Activated naive CD4-positive, alpha-beta T cell treated with anti-CD3 and anti-CD28 coated beads for 36 hours (primary cell): ENCODE measurements at regions of chr6 and their contacts with region 1.

Region 1: GRCh38 chr6:33271458-33272274 is at the starts of genes RPS18 and VPS52:
- DNase-seq: peak; percentile 95
- H3K4me3 Mint-ChIP-seq: peak within 1 kb of the TSS; percentile 99
- H3K27ac Mint-ChIP-seq: peak within 1 kb of the TSS; percentile 100
- H3K4me1 Mint-ChIP-seq: peaks cover 45% of the 10 kb centered on the region
- H3K27me3 Mint-ChIP-seq: no peaks in the 10 kb centered on the region
- total RNA-seq, gene RPS18: 5,497 to 5,551 TPM
- total RNA-seq, gene VPS52: 30.3 to 31.0 TPM

Region 2: GRCh38 chr6:33200219-33201146 is 71.2 kb before region 1 on chr6 and contains the starts of genes RXRB and SLC39A7:
- CTCF ChIA-PET with region 1: no interaction called
- intact Hi-C with region 1: loop called (anchors 1 kb)
- DNase-seq: peak; percentile 100
- H3K4me3 Mint-ChIP-seq: peak within 1 kb of the TSS; percentile 98
- H3K27ac Mint-ChIP-seq: peak within 1 kb of the TSS; percentile 97
- H3K4me1 Mint-ChIP-seq: peaks cover 60% of the 10 kb centered on the region
- H3K27me3 Mint-ChIP-seq: no peaks in the 10 kb centered on the region
- total RNA-seq, gene RXRB: 50.4 to 50.6 TPM
- total RNA-seq, gene SLC39A7: 35.9 to 39.5 TPM

Region 3: GRCh38 chr6:33288921-33289748 is 17.5 kb after region 1 on chr6 and contains the starts of genes PFDN6 and WDR46:
- CTCF ChIA-PET with region 1: interaction called, 11 read pairs
- intact Hi-C with region 1: loop called (anchors 1 kb)
- DNase-seq: peak; percentile 85
- H3K4me3 Mint-ChIP-seq: peak within 1 kb of the TSS; percentile 99
- H3K27ac Mint-ChIP-seq: peak within 1 kb of the TSS; percentile 91
- H3K4me1 Mint-ChIP-seq: peaks cover 43% of the 10 kb centered on the region
- H3K27me3 Mint-ChIP-seq: no peaks in the 10 kb centered on the region
- total RNA-seq, gene PFDN6: 67.9 to 81.3 TPM
- total RNA-seq, gene WDR46: 42.5 to 42.9 TPM

Region 4: GRCh38 chr6:33317669-33318425 is 46.2 kb after region 1 on chr6 and contains the start of gene ZBTB22:
- CTCF ChIA-PET with region 1: interaction called, 6 read pairs
- intact Hi-C with region 1: loop called (anchors 1 kb)
- DNase-seq: peak; percentile 97
- H3K4me3 Mint-ChIP-seq: peak within 1 kb of the TSS; percentile 94
- H3K27ac Mint-ChIP-seq: peak within 1 kb of the TSS; percentile 95
- H3K4me1 Mint-ChIP-seq: peaks cover 72% of the 10 kb centered on the region
- H3K27me3 Mint-ChIP-seq: no peaks in the 10 kb centered on the region
- total RNA-seq, gene ZBTB22: 8.8 to 9.0 TPM

Region 5: DNA sequence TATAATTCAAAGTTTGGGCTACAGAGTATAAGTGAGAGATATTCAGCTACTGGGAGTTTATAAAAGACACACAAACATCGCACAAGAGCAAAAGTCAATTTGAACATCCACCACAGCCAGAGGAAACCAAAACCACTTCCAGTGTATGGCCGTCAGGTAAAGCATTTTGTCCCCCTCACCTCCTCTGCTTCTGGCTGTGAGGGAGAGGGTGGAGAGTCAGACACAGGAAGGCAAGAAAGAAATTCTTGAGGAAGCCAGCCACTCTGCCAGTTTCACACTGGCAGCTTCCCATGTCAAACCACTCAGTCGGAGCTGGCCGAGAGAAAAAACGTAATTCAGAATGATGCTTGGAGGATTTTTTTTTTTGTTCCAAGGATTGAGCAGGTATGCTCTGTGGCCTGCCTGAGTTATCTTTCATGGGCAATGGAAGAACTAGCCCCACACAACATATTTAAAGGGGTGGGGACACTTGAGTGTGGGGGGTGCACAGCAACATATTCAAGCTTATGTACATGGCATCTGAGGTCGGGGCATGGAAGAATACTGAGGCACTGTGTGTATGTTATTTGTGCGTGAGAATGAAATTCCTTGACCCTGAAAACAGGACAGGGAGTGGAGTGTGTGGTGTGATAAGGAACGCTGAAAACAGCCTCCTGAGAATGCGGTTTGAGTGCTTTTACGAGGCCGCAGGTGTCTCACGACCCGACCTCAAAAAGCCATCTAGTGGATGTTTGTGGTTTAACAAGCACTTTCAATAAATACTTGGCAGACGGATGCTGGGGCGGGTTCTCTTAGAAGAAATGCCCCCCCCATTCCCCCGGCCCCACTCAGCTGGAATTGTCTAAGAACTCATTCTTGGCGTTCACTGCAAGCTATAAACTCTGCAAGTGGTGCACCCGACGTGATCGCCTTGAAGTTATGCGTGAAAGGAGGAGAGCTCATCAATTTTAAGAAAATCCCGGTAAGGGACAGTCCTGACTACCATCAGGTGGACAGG is 73.3 kb after region 1 on chr6:
- CTCF ChIA-PET with region 1: interaction called, 21 read pairs
- intact Hi-C with region 1: loop called (anchors 1 kb)
- DNase-seq: peak; percentile 77
- H3K4me3 Mint-ChIP-seq: peak overlapping the region; percentile 64
- H3K27ac Mint-ChIP-seq: peak overlapping the region; percentile 74
- H3K4me1 Mint-ChIP-seq: peaks cover 20% of the 10 kb centered on the region
- H3K27me3 Mint-ChIP-seq: no peaks in the 10 kb centered on the region